ENCODE measurements at regions of chr3 and their contacts with region 1.

Region 1: DNA sequence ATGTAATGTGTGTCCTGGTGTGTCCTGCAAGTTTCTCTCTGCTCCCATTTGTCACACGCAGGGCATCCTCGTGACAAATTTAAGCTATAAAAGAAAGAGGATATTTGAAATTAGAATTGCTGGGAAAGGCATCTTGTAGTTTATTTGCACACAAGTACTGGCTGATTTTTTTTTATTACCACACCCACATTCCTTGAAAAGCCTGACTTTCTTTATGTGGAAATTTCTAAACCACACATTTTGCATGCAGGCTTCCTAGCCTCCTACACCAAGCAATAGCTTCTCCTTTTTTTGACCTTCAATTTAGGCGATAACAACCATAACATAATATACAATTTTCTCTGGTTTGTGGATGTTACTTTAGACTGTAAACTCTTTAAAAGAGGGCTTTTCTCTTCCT is 126.1 kb downstream of the SERPINI1 start:
- DNase-seq: no peak
- CTCF ChIP-seq: no peak

Region 2: DNA sequence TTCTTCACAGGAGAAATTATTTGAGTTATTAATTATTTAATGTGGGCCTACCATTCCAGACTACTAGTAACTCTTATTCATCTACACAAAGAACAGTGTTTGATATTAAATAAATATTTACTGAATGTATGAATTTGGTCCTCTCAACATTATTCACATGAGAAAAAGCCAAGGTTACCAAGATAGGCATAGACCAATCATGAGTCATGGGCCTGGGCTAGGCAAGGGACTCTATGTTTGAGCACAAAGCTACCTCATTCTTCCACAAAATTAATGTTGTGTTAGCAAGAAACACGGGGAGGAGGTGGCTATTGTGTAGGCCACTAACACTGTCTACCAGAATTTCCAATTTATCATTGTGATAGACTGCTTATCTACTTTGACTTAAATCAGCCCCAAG is 10.5 kb before region 1 on chr3:
- CTCF ChIA-PET with region 1: interaction called, 11 read pairs
- POLR2A ChIA-PET with region 1: no interaction called
- DNase-seq: no peak
- CTCF ChIP-seq: no peak

Region 3: GRCh38 chr3:167872941-167873340 is 11.3 kb after region 1 on chr3:
- CTCF ChIA-PET with region 1: interaction called, 13 read pairs
- POLR2A ChIA-PET with region 1: no interaction called
- DNase-seq: no peak
- CTCF ChIP-seq: no peak

Region 4: GRCh38 chr3:167882067-167882667 is 20.5 kb after region 1 on chr3:
- CTCF ChIA-PET with region 1: interaction called, 12 read pairs
- POLR2A ChIA-PET with region 1: no interaction called
- DNase-seq: peak; percentile 31
- CTCF ChIP-seq: peak; percentile 28